WTC11 (cell line): ENCODE measurements at regions of chr11 and their contacts with region 1.

Region 1: DNA sequence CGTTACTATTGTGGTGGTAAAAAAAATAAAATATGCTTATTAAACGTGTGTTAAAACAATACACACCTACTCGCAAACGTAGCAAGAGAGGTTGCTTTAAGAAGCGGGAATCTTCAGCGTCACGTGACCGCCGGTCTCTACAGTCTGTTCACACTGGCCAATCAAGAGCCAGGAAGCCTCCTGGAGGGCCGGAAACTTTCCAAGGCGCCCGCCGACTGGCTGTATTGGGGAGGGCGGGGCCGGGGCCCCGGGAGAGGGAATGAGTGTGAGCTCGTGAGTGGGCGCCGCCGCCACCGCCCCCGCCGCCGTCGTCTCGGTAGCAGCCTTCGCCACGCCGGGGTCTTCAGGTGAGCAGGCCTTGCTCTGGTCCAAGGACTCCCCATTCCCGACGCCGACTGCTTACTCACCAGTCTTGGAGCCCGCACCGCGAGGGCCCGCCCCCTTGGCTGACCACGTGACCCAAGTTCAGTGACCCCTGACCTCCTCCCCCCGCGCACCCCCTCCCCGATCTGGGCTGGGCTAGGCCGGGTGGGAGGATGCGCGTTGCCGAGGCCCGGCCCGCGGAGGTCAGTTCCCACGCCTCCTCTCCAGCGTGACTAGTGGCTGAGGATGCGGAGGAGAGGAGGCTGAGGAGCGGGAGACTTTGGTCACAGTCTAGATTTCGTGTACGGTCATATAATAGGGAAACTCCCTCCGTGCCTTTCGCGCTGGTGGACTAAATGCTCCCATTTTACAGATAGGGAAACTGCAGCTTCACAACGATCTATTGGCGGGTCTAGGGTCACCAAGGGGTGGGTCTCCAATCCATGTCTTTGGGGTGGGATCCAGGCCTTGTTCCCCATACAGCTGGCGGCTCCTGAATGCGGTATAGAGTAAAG is at the start of gene TAF6L:
- DNase-seq: peak; percentile 96
- ATAC-seq: peak; percentile 82
- H3K4me3 Mint-ChIP-seq: peak within 1 kb of the TSS; percentile 88
- H3K27ac Mint-ChIP-seq: peak within 1 kb of the TSS; percentile 98
- H3K4me1 Mint-ChIP-seq: peaks cover 14% of the 10 kb centered on the region
- H3K27me3 Mint-ChIP-seq: no peaks in the 10 kb centered on the region; the same call in 1 of the 2 replicates
- CTCF ChIP-seq: no peak
- total RNA-seq, gene TAF6L: 33.8 to 42.1 TPM (median 36.3 TPM) in 3 replicates

Region 2: DNA sequence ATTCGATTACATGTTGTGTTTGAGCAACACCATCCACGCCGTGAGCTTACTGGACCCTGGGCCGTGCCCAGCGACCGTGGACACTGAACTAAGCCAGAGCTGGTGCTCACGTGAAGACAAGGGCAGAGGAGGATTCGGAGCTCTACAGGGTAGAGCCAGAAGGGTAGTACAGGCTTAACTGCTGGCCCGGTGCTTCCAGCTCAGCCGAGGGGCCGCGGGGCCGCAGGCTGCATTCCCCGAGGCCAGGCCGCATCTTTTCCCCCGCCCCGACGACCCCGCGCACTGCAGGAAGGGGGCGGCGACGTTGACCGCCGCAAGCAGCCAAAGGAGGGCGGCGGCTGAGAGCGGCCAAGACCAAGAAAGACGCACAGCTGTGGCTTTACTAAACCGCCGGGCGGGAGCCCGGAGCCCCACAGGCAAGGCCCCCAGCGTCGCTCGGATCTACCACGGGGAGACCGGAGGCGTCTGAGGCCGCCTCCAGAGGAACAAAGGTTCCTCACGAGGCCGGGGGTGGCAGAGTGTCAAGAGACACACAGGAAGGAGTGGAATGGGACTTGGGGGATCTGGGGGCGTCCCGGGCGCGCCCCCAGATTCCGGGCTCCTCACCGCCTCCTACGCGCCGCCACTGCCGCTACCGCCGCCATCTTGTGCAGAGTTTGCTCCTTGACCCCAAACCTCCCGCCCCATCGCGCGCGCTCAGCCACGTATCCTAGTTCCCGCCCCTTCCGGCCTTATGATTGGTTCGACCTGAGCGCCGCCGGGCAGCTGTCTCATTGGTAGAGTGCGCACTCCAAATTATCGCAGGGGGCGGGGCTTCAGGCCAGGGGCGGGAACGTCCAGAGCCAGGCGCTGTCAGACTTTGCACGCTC is 125.2 kb before region 1 on chr11 and contains the start of gene GANAB:
- CTCF ChIA-PET with region 1: no interaction called
- POLR2A ChIA-PET with region 1: no interaction called
- DNase-seq: peak; percentile 99
- ATAC-seq: peak; percentile 98
- H3K4me3 Mint-ChIP-seq: peak within 1 kb of the TSS; percentile 99
- H3K27ac Mint-ChIP-seq: peak within 1 kb of the TSS; percentile 96
- H3K4me1 Mint-ChIP-seq: peaks cover 10% of the 10 kb centered on the region
- H3K27me3 Mint-ChIP-seq: no peaks in the 10 kb centered on the region
- CTCF ChIP-seq: no peak
- total RNA-seq, gene GANAB: 323 to 350 TPM (median 327 TPM) in 3 replicates

Region 3: DNA sequence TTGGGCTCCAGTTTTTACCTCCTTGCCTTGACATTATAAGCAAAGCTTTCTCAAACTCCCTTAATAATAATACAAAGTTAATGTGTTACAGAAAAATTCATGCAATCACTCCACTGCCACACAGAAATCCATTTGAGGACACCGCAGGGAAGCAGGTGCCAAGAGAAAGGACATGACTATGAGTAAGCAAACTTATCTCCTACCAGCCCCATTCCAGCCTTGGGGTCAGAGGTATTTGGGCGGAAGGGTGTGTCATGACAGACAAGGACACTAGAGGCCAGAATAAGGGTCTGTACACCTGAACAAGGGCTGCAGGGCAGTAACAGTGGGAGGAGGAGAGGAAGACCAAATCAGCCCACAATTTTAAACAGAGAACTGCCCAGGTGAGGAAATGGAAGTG is 58.0 kb before region 1 on chr11:
- CTCF ChIA-PET with region 1: interaction called, 24 read pairs
- POLR2A ChIA-PET with region 1: no interaction called
- DNase-seq: no peak
- ATAC-seq: no peak
- H3K4me3 Mint-ChIP-seq: no peak overlapping the region
- H3K27ac Mint-ChIP-seq: peak overlapping the region; percentile 79
- H3K4me1 Mint-ChIP-seq: peaks cover 40% of the 10 kb centered on the region
- H3K27me3 Mint-ChIP-seq: no peaks in the 10 kb centered on the region
- CTCF ChIP-seq: no peak

Region 4: DNA sequence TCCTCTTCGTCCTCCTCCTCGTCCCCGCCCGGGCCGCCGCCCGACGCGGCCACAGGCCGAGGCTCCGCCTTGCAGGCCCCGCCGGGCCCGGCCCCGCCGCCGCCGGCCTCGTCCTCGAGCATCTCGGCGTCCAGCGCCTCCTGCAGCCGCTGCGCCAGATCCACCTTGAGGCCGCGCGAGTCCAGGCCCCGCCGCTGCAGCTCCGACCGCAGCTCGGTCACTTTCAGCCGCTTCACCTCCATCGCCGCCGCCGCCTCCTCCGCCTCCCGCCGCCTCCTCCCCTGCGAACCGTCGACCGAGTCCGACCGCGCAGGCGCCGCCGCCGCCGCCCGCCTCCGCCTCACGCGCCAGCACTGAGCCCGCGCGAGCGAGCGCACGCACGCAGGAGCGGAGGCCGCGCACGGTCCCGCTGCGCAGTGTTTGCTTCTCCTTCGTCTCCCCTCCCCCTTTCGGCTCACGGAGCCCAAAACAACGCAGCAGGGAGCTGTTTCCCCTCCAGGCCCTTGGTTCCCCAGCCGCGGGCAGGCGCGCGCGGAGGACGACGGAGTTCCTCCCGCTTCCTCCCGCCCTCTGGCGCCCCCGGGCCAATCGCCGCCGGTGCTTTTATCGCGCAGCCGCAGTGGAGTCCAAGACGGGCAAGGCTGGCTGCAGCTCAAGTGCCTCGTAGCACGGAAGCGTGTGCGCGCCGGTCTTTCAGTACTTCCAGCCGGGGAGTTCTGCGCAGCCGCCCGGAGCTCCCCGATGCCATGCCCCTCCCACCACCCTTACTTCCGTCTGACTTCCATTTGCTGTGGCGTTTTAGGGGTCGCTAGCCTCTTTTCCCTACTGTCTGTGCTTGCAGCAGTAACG is 44.2 kb before region 1 on chr11 and contains the start of gene HNRNPUL2:
- CTCF ChIA-PET with region 1: interaction called, 59 read pairs
- POLR2A ChIA-PET with region 1: interaction called, 9 read pairs
- DNase-seq: peak; percentile 98
- ATAC-seq: peak; percentile 89
- H3K4me3 Mint-ChIP-seq: peak within 1 kb of the TSS; percentile 98
- H3K27ac Mint-ChIP-seq: peak within 1 kb of the TSS; percentile 100
- H3K4me1 Mint-ChIP-seq: peaks cover 25% of the 10 kb centered on the region
- H3K27me3 Mint-ChIP-seq: peaks cover 4% of the 10 kb centered on the region; the same call in 1 of the 2 replicates
- CTCF ChIP-seq: no peak
- total RNA-seq, gene HNRNPUL2: 42.1 to 42.9 TPM (median 42.2 TPM) in 3 replicates

Region 5: GRCh38 chr11:62747475-62748160 is 23.8 kb before region 1 on chr11:
- CTCF ChIA-PET with region 1: interaction called, 12 read pairs
- POLR2A ChIA-PET with region 1: interaction called, 5 read pairs
- DNase-seq: no peak
- ATAC-seq: no peak
- H3K4me3 Mint-ChIP-seq: no peak overlapping the region
- H3K27ac Mint-ChIP-seq: peak overlapping the region; percentile 80
- H3K4me1 Mint-ChIP-seq: peaks cover 6% of the 10 kb centered on the region
- H3K27me3 Mint-ChIP-seq: no peaks in the 10 kb centered on the region
- CTCF ChIP-seq: no peak

Region 6: DNA sequence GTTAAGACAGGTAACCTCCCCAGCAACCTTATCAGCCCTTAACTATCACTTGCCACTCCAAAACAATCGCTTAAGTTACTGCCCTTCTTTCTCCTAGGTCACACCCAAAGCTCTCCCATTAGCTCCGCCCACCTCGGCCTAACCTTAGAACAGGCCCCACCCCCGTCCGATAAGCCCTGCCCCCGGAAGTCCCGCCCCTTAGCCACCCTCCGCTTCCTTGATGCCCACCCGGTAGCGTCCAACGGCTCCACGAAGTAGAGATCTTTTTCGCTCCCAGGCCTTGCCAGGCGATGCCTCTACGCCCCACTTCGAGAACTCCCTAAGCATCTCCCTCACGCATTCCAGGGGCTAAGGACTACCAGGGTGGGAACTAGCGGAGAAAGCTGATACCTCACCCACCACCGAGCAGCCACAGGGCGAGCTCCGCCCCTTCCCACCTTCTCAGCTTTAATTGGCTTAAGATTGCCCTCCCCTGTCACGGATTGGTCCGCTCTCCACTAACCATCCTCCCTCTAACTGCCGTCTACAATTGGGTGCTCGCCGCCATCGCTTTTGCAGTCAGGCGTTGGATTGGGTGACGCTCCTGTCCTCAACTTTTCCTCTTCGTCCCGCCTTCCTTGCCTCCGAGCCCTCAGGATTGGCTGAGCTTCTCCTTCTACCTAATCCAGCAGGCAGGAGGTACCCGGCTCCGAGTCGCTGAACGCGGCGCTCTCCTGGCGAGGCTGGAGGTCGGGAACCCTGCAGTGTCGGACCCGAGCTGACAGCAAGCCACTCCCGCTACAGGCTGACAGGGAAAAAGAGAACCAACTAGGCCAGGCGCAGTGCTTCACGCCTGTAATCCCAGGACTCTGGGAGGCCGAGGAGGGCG is 17.4 kb before region 1 on chr11 and contains the start of gene ZBTB3:
- CTCF ChIA-PET with region 1: interaction called, 67 read pairs
- POLR2A ChIA-PET with region 1: interaction called, 10 read pairs
- DNase-seq: peak; percentile 97
- ATAC-seq: peak; percentile 91
- H3K4me3 Mint-ChIP-seq: peak within 1 kb of the TSS; percentile 95
- H3K27ac Mint-ChIP-seq: peak within 1 kb of the TSS; percentile 99
- H3K4me1 Mint-ChIP-seq: peaks cover 28% of the 10 kb centered on the region
- H3K27me3 Mint-ChIP-seq: no peaks in the 10 kb centered on the region; the same call in 1 of the 2 replicates
- CTCF ChIP-seq: no peak
- total RNA-seq, gene ZBTB3: 82.3 to 88.1 TPM (median 88.0 TPM) in 3 replicates